Cardiac septum (tissue), 1 donor: ENCODE measurements at regions of chr1 and their contacts with region 1.

Region 1: DNA sequence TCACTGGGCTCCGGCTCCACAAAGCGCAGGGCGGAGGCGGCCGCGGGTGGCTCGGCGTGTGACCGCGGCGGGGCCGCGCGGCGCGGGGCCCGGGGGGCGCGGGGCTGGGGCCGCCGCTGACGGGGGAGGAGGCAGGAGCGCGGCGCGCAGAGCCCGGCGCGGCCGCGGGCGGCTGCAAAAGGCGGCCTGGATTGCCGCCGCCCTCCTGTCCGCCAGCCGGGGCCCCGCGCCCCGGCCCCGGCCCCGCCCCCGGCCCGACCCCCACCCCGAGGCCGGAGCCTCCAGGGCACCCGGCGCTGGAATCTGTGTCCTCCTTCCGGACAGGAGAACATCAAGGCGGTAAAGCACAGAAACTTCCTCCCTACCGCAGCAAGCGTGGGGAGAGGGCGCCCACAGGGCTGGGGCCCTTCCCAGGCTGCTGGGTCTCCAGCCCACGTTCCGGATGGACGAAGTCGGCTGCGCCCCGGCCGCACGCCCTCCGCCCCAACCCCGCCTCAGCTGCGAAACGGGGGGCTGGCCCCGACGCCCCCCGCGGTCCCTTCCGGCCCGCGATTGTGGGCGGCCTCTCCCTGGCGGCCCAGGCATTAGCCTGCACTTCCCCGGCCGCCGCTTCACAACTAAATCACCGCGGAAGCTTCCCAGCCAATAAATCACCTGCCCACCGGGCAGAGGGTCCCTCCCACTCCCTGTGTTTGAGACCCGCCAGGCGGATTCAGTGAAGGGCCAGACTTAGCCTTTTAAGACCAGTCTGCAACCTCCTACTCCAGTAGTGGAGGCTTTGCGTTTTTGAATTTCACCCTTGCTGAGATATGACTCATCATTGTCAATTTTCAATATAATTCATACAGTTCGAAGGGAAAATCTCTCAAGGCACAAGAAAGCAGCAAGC is 106.0 kb downstream of the SLC45A1 start:
- DNase-seq: peak; percentile 79

Region 2: GRCh38 chr1:8026153-8026975 is 397.5 kb before region 1 on chr1 and contains the start of gene ERRFI1:
- intact Hi-C with region 1: loop called (anchors 5 kb)
- DNase-seq: peak; percentile 95
- total RNA-seq, gene ERRFI1: 8.2 TPM

Region 3: DNA sequence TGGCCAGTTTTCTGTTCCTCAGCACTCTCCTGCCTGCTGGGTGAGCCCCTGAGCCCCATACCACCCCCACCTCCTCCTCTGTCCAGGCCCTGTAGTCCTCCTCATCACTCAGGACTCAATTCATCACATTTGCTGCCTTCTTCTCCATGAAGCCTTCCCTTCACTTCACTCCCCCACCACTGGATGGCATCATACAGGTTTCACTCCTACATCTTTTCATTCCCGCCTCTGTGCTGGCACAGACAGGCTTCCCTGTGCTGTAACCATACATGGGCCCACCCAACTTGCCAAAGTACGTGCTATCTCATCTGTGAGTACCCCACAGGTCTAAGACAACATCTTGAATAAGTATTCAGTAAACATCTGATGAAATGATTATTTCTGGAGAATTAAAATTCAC is 49.1 kb before region 1 on chr1:
- intact Hi-C with region 1: loop called (anchors 2 kb)
- DNase-seq: no peak

Region 4: GRCh38 chr1:8463144-8463927 is 39.4 kb after region 1 on chr1:
- intact Hi-C with region 1: loop called (anchors 5 kb)
- DNase-seq: no peak

Region 5: GRCh38 chr1:8525558-8526275 is 101.8 kb after region 1 on chr1:
- intact Hi-C with region 1: loop called (anchors 5 kb)
- DNase-seq: peak; percentile 91

Region 6: DNA sequence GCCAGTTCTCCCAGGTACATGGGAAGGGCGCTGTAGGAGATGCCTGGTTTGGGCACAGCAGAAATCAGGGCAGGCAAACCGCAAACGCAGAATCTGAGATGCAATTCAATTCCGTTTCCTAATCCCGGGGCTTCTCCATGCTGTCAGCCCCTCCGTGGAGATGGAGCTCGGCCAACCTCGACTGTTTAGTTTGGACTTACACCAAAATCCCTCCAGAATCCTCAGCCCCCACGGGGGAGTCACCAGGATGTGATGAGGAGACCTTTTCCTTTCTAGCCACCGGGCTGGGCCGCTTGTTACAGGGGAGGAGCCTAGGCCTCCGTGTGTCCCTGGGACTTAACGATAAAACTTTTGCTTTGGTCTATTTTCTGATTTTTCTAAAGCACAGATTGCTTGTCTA is 594.4 kb after region 1 on chr1:
- intact Hi-C with region 1: no loop called
- DNase-seq: no peak